Activated CD4-positive, alpha-beta memory T cell treated with anti-CD3 and anti-CD28 coated beads for 36 hours (primary cell): ENCODE measurements at regions of chr3 and their contacts with region 1.

Region 1: DNA sequence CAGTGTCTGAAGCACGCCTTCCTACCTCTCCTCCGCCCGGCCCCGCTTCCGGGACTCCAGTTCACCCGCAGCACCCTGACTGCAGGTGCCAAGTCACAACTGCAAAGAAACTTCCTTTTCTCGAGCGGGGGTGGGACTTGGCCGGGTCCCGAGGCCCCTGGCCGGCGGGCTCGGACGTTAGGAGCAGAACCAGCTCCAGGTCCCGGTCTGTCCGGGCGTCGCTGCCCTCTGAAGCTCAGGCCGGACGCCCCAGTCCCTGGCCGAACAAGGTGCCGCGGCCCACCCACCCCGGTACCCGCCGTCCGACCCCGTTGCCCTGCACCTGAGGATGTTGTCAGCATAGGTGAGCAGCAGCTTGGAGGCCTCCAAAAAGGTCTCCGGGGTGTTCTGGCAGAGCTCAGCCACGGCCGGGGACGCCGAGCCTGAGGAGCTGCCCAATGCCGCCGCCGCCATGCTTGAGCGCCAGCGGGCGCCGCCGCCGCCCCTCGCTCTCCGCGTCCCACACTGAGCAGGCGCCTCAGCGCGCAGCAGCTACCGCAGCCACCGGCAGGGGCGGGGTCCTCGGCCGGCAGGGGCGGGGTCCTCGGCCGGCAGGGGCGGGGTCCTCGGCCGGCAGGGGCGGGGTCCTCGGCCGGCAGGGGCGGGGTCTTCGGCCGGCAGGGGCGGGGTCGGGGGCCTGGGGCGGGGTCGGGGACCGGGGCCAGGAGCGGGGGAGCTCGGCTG is at the start of gene NGLY1:
- DNase-seq: peak; percentile 89
- H3K4me3 Mint-ChIP-seq: peak within 1 kb of the TSS; percentile 87
- H3K27ac Mint-ChIP-seq: peak within 1 kb of the TSS; percentile 83
- H3K4me1 Mint-ChIP-seq: peaks cover 46% of the 10 kb centered on the region
- H3K27me3 Mint-ChIP-seq: no peaks in the 10 kb centered on the region
- total RNA-seq, gene NGLY1: 51.5 to 56.7 TPM

Region 2: DNA sequence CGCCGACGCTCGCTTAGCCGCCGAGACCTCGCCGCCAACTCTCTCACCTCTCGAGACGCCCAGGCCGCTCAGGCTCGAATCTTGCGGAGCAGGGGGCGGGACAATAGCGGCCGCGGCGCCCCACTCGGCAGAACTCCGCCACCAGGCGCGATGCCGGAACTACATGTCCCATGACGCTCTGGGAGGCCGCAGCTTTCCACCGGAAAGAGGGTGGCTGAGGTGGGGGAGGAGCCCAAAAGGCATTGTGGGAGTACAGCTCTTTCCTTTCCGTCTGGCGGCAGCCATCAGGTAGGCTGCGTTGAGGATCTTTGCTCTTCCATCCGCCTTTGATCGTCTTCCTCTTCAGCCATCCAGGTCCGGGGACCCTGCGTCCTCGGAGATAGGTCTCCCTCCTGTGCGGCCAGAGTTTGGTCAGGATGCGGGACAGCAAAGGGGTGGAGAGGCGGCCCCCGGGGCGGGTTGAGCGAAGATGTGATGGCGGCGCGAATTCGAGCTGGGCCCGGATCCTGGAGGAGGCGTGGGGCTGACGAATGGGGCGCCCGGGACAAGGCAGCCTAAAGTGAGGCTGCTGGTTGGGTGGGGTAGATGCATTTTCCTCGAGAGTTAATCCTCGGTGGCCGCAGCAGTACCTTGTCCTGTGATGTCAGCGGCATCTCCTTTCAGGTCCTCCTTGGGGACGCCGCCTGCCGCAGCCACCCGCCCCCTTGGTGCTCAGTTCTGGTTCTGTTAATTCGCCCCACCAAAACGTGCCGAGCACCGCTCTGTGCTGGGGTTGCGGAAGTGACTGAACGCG is 1866.0 kb before region 1 on chr3 and contains the starts of genes NKIRAS1 and RPL15:
- CTCF ChIA-PET with region 1: no interaction called
- POLR2A ChIA-PET with region 1: interaction called, 3 read pairs
- intact Hi-C with region 1: loop called (anchors 5 kb)
- DNase-seq: peak; percentile 98
- H3K4me3 Mint-ChIP-seq: peak within 1 kb of the TSS; percentile 98
- H3K27ac Mint-ChIP-seq: peak within 1 kb of the TSS; percentile 100
- H3K4me1 Mint-ChIP-seq: peaks cover 51% of the 10 kb centered on the region
- H3K27me3 Mint-ChIP-seq: peaks cover 6% of the 10 kb centered on the region
- total RNA-seq, gene NKIRAS1: 3.9 TPM
- total RNA-seq, gene RPL15: 2,597 to 2,603 TPM

Region 3: GRCh38 chr3:24628523-24629258 is 1154.4 kb before region 1 on chr3:
- CTCF ChIA-PET with region 1: no interaction called
- POLR2A ChIA-PET with region 1: no interaction called
- intact Hi-C with region 1: no loop called
- DNase-seq: no peak
- H3K4me3 Mint-ChIP-seq: no peak overlapping the region
- H3K27ac Mint-ChIP-seq: no peak overlapping the region
- H3K4me1 Mint-ChIP-seq: no peaks in the 10 kb centered on the region
- H3K27me3 Mint-ChIP-seq: no peaks in the 10 kb centered on the region

Region 4: GRCh38 chr3:25817107-25817506 is 34.0 kb after region 1 on chr3:
- CTCF ChIA-PET with region 1: no interaction called
- POLR2A ChIA-PET with region 1: interaction called, 3 read pairs
- intact Hi-C with region 1: loop called (anchors 5 kb)
- DNase-seq: no peak
- H3K4me3 Mint-ChIP-seq: no peak overlapping the region
- H3K27ac Mint-ChIP-seq: no peak overlapping the region
- H3K4me1 Mint-ChIP-seq: peaks cover 9% of the 10 kb centered on the region
- H3K27me3 Mint-ChIP-seq: peaks cover 1% of the 10 kb centered on the region

Region 5: GRCh38 chr3:25856902-25857518 is 73.9 kb after region 1 on chr3:
- CTCF ChIA-PET with region 1: interaction called, 4 read pairs
- POLR2A ChIA-PET with region 1: no interaction called
- intact Hi-C with region 1: loop called (anchors 5 kb)
- DNase-seq: no peak
- H3K4me3 Mint-ChIP-seq: no peak overlapping the region
- H3K27ac Mint-ChIP-seq: no peak overlapping the region
- H3K4me1 Mint-ChIP-seq: no peaks in the 10 kb centered on the region
- H3K27me3 Mint-ChIP-seq: no peaks in the 10 kb centered on the region